T-cell (primary cell): ENCODE measurements at regions of chr14 and their contacts with region 1.

Region 1: DNA sequence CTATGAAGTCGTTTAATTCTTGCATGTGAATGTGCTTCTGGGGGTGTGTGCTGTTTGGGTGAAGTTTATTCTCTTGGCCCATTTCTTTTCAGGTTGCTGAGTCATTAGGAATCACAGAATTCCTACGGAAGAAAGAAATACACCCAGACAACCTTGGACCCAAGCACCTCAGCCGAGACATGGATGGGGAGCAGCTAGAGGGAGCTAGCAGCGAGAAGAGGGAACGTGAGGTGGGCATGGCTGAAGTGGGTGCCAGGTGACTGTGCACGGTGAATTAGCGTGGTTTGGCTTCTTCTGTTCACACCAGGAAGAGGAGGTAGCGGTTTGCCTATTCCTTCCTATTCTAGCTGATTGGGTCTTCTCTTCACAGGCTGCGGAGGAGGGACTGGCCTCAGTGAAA is 19.2 kb downstream of the ZNF839 start:
- DNase-seq: no peak
- ATAC-seq: no peak
- H3K4me3 ChIP-seq: no peak overlapping the region
- H3K4me3 Mint-ChIP-seq: no peak overlapping the region
- H3K27ac ChIP-seq: no peak overlapping the region
- H3K27ac Mint-ChIP-seq: no peak overlapping the region
- H3K4me1 ChIP-seq: no peaks in the 10 kb centered on the region
- H3K4me1 Mint-ChIP-seq: no peaks in the 10 kb centered on the region
- H3K27me3 ChIP-seq: no peaks in the 10 kb centered on the region
- H3K27me3 Mint-ChIP-seq: no peaks in the 10 kb centered on the region

Region 2: GRCh38 chr14:102362545-102363181 is 23.9 kb after region 1 on chr14 and contains the starts of genes CINP and TECPR2:
- CTCF ChIA-PET with region 1: no interaction called
- POLR2A ChIA-PET with region 1: interaction called in 1 of 2 experiments, 14 read pairs
- DNase-seq: peak; percentile 90 to 98 (median 95)
- ATAC-seq: peak; percentile 94 to 96 (median 95)
- H3K4me3 ChIP-seq: peak within 1 kb of the TSS; percentile 62 to 83
- H3K4me3 Mint-ChIP-seq: peak within 1 kb of the TSS in 2 of 3 donors; percentile 92 to 97
- H3K27ac ChIP-seq: peak within 1 kb of the TSS; percentile 69
- H3K27ac Mint-ChIP-seq: peak within 1 kb of the TSS; percentile 87 to 94
- H3K4me1 ChIP-seq: peaks cover 17 to 19% of the 10 kb centered on the region in 2 experiments
- H3K4me1 Mint-ChIP-seq: peaks cover 32 to 38% (median 33%) of the 10 kb centered on the region in 3 donors
- H3K27me3 ChIP-seq: no peaks in the 10 kb centered on the region
- H3K27me3 Mint-ChIP-seq: no peaks in the 10 kb centered on the region
- total RNA-seq, gene CINP: 12.9 to 29.9 (median 25.8) TPM
- total RNA-seq, gene TECPR2: 8.6 to 16.5 (median 10.8) TPM

Region 3: DNA sequence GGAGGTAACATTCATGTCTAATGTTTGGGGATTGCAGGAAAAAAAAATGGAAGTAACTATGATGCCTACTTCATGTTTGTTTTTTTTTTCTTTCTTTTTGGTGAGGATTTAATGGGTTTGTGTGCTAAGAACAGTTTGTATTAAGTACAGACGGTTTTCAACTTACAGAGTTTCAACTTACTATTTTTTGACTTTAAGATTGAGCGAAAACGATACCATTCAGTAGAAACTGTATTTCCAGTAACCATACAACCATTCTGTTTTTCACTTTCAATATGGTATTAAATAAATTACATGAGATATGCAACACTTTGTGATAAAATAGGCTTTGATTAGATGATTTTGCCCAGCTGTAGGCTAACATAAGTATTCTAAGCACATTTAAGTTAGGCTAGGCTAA is 34.4 kb after region 1 on chr14:
- CTCF ChIA-PET with region 1: no interaction called
- POLR2A ChIA-PET with region 1: no interaction called
- DNase-seq: no peak
- ATAC-seq: no peak
- H3K4me3 ChIP-seq: no peak overlapping the region
- H3K4me3 Mint-ChIP-seq: no peak overlapping the region
- H3K27ac ChIP-seq: no peak overlapping the region
- H3K27ac Mint-ChIP-seq: no peak overlapping the region
- H3K4me1 ChIP-seq: peaks cover 0 to 4% of the 10 kb centered on the region in 2 experiments
- H3K4me1 Mint-ChIP-seq: peaks cover 5 to 27% (median 12%) of the 10 kb centered on the region in 3 donors
- H3K27me3 ChIP-seq: no peaks in the 10 kb centered on the region
- H3K27me3 Mint-ChIP-seq: no peaks in the 10 kb centered on the region

Region 4: DNA sequence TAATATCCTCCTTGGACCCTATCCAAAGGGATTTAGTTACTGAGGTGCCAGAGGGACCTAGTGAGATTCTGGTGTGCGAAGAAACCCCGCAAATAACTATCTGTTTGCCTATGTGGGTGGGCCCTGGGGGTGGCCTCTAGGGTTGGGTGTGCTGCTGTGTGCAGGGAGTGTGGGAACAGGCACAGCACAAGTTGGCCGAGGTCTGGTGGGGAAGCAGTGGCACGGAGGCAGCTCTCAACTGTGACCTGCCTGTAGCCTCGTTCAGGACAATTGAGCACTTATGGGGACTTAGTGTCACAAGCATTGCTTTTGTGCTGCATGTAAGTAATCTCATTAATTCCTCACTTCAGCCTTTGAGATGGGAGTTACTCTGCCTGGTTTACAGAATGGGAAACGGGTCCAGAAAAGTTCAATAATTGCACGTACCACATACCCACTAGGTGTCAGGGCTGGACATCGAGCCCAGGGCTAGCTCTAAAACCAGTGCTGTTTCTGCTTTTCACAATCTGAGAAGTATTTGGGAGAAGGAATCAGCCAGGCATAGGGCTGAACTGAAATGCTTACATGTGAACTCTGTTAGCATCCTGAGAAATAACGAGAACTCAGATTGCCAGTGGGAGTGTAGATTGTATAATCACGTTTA is 82.8 kb after region 1 on chr14:
- CTCF ChIA-PET with region 1: interaction called in 1 of 2 experiments, 10 read pairs
- POLR2A ChIA-PET with region 1: no interaction called
- DNase-seq: no peak
- ATAC-seq: no peak
- H3K4me3 ChIP-seq: no peak overlapping the region
- H3K4me3 Mint-ChIP-seq: no peak overlapping the region
- H3K27ac ChIP-seq: no peak overlapping the region
- H3K27ac Mint-ChIP-seq: no peak overlapping the region
- H3K4me1 ChIP-seq: no peaks in the 10 kb centered on the region
- H3K4me1 Mint-ChIP-seq: peaks cover 0 to 4% (median 0%) of the 10 kb centered on the region in 3 donors
- H3K27me3 ChIP-seq: no peaks in the 10 kb centered on the region
- H3K27me3 Mint-ChIP-seq: no peaks in the 10 kb centered on the region